AG04449 (cell line): ENCODE measurements at regions of chr10 and their contacts with region 1.

Region 1: GRCh38 chr10:72337020-72337629 is 17.6 kb downstream of the DNAJB12 start:
- DNase-seq: no peak
- H3K4me3 ChIP-seq: no peak overlapping the region
- CTCF ChIP-seq: peak; percentile 94

Region 2: DNA sequence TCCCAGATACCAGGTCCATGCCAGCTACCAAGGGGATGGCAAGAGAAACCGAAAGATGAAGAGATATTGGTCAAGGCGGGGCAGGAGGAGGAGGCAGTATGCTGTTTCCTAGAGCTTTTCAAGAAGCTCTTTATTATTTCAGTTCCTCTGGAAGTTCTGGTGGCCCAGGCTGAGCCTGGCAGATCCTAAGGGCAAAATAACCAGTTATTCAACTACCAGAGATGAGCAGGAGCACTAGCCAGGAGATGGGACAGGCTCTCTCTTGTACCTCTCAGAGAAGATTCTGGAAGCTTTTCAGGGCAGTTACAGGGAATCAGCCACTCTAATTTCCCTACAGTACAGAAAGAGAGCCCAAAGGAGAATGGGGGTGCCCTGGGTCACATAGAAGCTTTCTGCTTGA is 12.3 kb after region 1 on chr10:
- CTCF ChIA-PET with region 1: interaction called, 81 read pairs
- POLR2A ChIA-PET with region 1: no interaction called
- DNase-seq: no peak
- H3K4me3 ChIP-seq: no peak overlapping the region
- CTCF ChIP-seq: no peak

Region 3: DNA sequence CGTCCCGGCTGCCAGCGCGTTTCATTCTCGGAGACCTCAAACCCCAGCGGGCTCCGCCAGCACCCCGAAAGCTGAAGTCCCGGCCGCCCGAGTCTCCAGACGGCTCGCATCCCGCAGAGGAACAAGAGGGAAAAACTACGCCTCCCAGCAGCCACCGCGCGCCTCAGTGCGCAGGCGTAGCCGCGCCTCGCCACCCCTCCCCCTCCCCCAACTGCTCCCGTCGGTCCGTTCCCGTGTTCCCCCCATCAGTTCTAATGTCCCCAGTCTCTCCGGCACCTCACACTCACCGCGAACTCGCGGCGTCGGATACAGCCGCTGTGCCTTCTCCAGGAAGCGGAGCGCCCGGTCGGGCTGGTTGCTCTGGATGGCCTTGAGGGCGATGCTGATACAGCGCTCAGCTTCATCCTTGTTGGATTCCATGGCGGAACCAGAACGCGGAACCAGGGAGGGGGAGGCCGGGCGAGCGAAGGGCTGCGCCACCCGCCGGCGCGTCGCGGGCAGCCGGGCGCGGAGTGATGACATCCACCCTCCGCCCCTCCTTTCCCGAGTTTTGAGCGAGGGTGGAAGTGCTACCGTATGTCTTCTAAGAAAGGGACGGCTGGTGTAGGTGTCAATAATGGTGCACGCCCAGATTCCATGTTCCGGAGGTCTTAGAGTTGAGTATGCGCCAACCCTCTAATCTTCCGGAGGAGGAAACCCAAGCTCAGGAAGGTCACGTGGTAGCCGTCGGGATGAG is 17.5 kb after region 1 on chr10 and contains the start of gene DNAJB12:
- CTCF ChIA-PET with region 1: interaction called, 81 read pairs
- POLR2A ChIA-PET with region 1: no interaction called
- DNase-seq: peak; percentile 56
- H3K4me3 ChIP-seq: peak within 1 kb of the TSS; percentile 100
- CTCF ChIP-seq: no peak

Region 4: DNA sequence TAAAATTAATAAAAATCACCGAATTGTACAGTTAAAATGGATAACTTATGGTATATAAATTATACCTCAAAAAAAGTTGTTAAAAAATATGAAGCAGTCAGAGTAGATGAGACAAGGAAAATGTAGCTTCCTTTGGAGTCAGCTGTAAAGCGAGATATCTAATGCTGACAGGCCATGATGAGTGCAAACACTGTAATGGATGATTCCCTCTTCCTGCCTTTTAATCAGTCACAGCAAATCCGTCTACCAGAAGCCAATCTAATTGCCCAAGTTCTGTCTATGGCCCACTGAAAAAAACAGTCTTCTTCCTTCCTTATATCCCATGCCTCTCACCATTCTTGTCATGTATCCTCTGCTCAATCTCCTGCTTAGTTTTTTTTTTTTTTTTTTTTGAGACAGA is 77.5 kb after region 1 on chr10:
- CTCF ChIA-PET with region 1: no interaction called
- POLR2A ChIA-PET with region 1: no interaction called
- DNase-seq: no peak
- H3K4me3 ChIP-seq: no peak overlapping the region
- CTCF ChIP-seq: no peak